ENCODE measurements at regions of chr11 and their contacts with region 1.

Region 1: GRCh38 chr11:69088676-69089146 is 40.0 kb downstream of the TPCN2 start:
- DNase-seq: peak; percentile 82
- ATAC-seq: peak; percentile 80
- H3K4me3 ChIP-seq: no peak overlapping the region
- H3K4me3 Mint-ChIP-seq: no peak overlapping the region
- H3K27ac ChIP-seq: no peak overlapping the region
- H3K27ac Mint-ChIP-seq: no peak overlapping the region
- H3K4me1 ChIP-seq: no peaks in the 10 kb centered on the region
- H3K4me1 Mint-ChIP-seq: peaks cover 2% of the 10 kb centered on the region
- H3K27me3 ChIP-seq: no peaks in the 10 kb centered on the region
- H3K27me3 Mint-ChIP-seq: no peaks in the 10 kb centered on the region
- CTCF ChIP-seq: peak; percentile 75

Region 2: DNA sequence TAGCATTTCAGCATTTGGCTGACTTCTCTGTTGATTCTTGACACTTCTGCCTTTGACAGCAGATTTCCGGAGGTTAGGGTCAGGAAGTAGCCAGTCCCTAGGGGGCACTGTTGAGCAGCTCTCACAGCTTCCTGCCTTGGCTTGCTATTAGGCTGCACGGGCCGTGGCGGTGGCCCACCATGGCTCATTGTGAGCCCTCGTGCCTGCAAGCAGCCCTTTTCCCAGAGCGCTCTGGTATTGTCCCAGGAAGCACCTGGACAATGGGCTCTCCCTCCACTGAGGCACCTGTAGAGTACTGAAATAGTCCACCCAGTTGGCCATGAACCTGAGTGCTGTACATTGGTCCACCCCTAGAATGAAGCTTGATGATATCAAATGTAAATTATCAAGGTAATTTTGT is 504.6 kb before region 1 on chr11:
- CTCF ChIA-PET with region 1: interaction called, 6 read pairs
- POLR2A ChIA-PET with region 1: no interaction called
- intact Hi-C with region 1: loop called (anchors 1 kb)
- DNase-seq: peak; percentile 70
- ATAC-seq: no peak
- H3K4me3 ChIP-seq: no peak overlapping the region
- H3K4me3 Mint-ChIP-seq: no peak overlapping the region
- H3K27ac ChIP-seq: no peak overlapping the region
- H3K27ac Mint-ChIP-seq: peak overlapping the region; percentile 50
- H3K4me1 ChIP-seq: no peaks in the 10 kb centered on the region
- H3K4me1 Mint-ChIP-seq: peaks cover 13% of the 10 kb centered on the region
- H3K27me3 ChIP-seq: no peaks in the 10 kb centered on the region
- H3K27me3 Mint-ChIP-seq: no peaks in the 10 kb centered on the region
- CTCF ChIP-seq: peak; percentile 75

Region 3: GRCh38 chr11:68903288-68904247 is 185.1 kb before region 1 on chr11 and contains the starts of genes IGHMBP2 and MRPL21:
- CTCF ChIA-PET with region 1: interaction called, 3 read pairs
- POLR2A ChIA-PET with region 1: no interaction called
- intact Hi-C with region 1: loop called (anchors 2 kb)
- DNase-seq: peak; percentile 90
- ATAC-seq: peak; percentile 95
- H3K4me3 ChIP-seq: peak within 1 kb of the TSS; percentile 79 to 99 (median 93)
- H3K4me3 Mint-ChIP-seq: peak within 1 kb of the TSS; percentile 97
- H3K27ac ChIP-seq: peak within 1 kb of the TSS; percentile 75 to 91
- H3K27ac Mint-ChIP-seq: peak within 1 kb of the TSS; percentile 88
- H3K4me1 ChIP-seq: peaks cover 14 to 21% of the 10 kb centered on the region in 2 donors
- H3K4me1 Mint-ChIP-seq: peaks cover 41% of the 10 kb centered on the region
- H3K27me3 ChIP-seq: no peaks in the 10 kb centered on the region
- H3K27me3 Mint-ChIP-seq: no peaks in the 10 kb centered on the region
- CTCF ChIP-seq: no peak
- total RNA-seq, gene IGHMBP2: 37.0 and 41.4 TPM in 2 replicates
- total RNA-seq, gene MRPL21: 34.4 and 35.8 TPM in 2 replicates

Region 4: GRCh38 chr11:68956142-68956541 is 132.6 kb before region 1 on chr11:
- CTCF ChIA-PET with region 1: interaction called, 5 read pairs
- POLR2A ChIA-PET with region 1: no interaction called
- intact Hi-C with region 1: loop called (anchors 2 kb)
- DNase-seq: peak; percentile 53
- ATAC-seq: no peak
- H3K4me3 ChIP-seq: no peak overlapping the region
- H3K4me3 Mint-ChIP-seq: no peak overlapping the region
- H3K27ac ChIP-seq: no peak overlapping the region
- H3K27ac Mint-ChIP-seq: no peak overlapping the region
- H3K4me1 ChIP-seq: peaks cover 4 to 13% of the 10 kb centered on the region in 2 donors
- H3K4me1 Mint-ChIP-seq: peaks cover 8% of the 10 kb centered on the region
- H3K27me3 ChIP-seq: peaks cover 0 to 8% (median 0%) of the 10 kb centered on the region in 4 experiments
- H3K27me3 Mint-ChIP-seq: no peaks in the 10 kb centered on the region
- CTCF ChIP-seq: peak; percentile 27

Region 5: DNA sequence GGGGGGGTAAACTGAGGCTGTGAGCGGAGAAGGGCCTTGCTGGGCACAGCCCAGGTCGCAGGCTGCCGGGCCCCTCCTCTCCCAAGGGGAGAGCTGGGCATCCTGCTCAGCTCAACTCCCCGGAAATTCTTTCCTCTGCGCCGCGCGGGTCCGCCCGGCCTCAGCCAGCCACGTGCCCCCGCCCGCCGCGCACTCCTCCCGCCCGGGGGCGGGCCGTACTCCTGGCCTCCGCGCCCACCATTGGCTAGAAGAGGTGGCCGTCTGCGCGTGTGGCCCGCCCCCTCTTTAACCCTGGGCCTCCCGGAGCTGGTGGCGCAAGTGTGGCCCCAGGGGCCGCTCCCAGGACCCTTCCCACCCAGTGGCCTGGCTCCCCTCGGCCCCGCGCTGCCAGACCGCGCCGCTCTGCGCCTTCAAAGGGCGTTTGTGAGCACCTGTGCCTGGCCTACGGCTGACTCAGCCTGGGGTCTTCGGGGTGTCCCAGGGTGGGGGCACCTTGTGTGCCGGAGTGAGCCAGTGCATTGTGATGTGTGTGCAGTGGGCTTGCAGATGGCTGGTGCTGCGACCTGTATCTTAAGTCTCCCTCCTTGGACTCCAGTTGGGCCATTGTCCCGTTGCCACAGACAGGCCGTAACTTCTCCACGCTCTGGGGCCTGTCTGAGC is 77.6 kb before region 1 on chr11:
- CTCF ChIA-PET with region 1: interaction called, 3 read pairs
- POLR2A ChIA-PET with region 1: no interaction called
- intact Hi-C with region 1: loop called (anchors 2 kb)
- DNase-seq: no peak
- ATAC-seq: peak; percentile 67
- H3K4me3 ChIP-seq: no peak overlapping the region
- H3K4me3 Mint-ChIP-seq: no peak overlapping the region
- H3K27ac ChIP-seq: no peak overlapping the region
- H3K27ac Mint-ChIP-seq: no peak overlapping the region
- H3K4me1 ChIP-seq: peaks cover 0 to 3% of the 10 kb centered on the region in 2 donors
- H3K4me1 Mint-ChIP-seq: peaks cover 2% of the 10 kb centered on the region
- H3K27me3 ChIP-seq: peaks cover 0 to 49% (median 13%) of the 10 kb centered on the region in 4 experiments
- H3K27me3 Mint-ChIP-seq: peaks cover 35% of the 10 kb centered on the region
- CTCF ChIP-seq: no peak

Region 6: DNA sequence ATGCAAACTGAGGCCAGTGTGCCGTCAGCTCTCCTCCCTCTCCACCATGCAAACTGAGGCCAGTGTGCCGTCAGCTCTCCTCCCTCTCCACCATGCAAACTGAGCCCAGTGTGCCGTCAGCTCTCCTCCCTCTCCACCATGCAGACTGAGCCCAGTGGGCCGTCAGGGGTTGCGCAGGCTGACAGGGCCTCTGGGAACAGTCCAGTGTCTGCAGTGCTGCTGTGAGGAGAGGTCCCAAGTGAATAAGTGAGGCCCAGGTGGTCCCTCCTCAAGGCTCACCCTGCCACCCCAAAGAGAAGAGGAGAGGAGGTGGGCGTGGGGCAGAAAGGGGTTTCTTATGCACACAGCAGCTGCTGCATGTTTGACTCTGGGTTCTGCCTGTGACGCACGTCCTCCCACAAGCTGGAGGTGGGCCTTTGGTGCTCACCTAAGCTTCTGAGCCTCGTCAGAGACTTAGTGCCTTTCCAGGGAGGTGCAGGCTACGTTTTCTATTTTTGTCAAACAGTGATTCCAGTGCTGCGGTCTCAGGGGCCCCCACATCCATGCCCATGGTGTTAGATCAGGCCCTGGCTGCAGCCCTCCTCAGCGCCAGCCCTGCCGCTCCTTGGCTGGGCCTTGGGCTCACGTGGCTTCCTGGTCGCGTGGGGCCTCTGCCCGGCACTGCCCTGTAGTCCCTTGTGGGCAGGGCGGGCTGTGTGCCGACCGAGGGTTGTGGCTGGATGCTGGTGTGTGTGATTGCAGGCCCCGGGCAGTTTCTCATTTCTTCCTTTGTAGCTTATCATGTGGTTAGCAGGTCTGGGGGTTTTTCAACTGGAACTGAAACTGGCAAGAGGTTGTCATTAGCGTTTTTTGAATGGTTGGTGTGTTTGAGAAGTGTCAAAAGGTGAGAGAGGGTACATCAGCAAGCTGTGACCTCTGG is 32.9 kb before region 1 on chr11:
- CTCF ChIA-PET with region 1: interaction called, 4 read pairs
- POLR2A ChIA-PET with region 1: interaction called, 3 read pairs
- intact Hi-C with region 1: loop called (anchors 1 kb)
- DNase-seq: peak; percentile 94
- ATAC-seq: peak; percentile 87
- H3K4me3 ChIP-seq: peak overlapping the region in 2 of 5 experiments; percentile 15 to 49
- H3K4me3 Mint-ChIP-seq: peak overlapping the region; percentile 61
- H3K27ac ChIP-seq: peak overlapping the region; percentile 92 to 98
- H3K27ac Mint-ChIP-seq: peak overlapping the region; percentile 89
- H3K4me1 ChIP-seq: peaks cover 30 to 64% of the 10 kb centered on the region in 2 donors
- H3K4me1 Mint-ChIP-seq: peaks cover 47% of the 10 kb centered on the region
- H3K27me3 ChIP-seq: no peaks in the 10 kb centered on the region
- H3K27me3 Mint-ChIP-seq: no peaks in the 10 kb centered on the region
- CTCF ChIP-seq: no peak

Region 7: DNA sequence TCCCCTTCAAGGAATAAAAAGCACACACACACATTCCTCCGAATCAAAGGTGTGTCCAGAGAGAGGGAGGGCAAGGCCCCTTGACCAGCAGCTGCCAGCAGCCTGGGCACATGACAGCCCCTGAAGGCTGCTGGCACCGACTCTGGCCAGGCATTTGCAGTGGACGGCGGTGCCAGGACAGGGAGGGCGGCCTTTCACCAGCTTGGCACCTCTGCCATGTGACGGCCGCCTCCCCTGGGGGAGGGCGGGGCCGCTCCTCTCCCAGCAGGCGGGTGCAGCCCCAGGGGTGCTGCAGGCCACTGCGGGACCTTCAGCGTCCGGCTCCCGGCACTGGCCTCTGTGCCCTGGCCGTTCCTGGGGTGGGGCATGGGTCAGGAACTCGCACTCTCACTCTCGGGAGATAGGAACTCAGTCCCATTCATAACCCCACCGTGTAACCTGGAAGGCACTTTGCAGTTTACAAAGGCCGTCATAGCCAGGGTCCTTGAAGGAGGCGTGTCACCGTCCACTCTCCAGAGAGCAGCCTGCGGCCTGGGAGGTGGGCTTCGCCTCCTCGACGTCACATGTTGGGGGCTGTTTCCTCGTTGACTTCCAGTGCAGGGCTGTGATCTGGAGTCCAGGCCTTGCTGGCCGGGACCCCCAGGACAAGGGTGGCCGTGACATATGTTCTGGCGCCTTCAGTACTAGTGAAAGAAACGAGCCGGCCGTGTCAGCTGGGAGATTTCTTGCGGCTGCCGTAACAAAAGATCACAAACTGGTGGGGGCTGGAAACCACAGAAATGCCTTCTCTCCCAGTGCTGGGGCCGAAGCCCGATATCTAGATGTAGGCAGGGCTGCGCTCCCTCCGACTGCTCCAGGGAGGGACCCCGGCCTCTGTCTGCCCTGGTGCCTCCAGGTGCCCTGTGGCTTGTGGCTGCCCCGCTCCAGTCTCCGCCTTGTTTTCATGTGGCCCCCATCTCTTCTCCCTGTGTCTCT is 27.2 kb after region 1 on chr11:
- CTCF ChIA-PET with region 1: no interaction called
- POLR2A ChIA-PET with region 1: no interaction called
- intact Hi-C with region 1: no loop called
- DNase-seq: no peak
- ATAC-seq: no peak
- H3K4me3 ChIP-seq: no peak overlapping the region
- H3K4me3 Mint-ChIP-seq: no peak overlapping the region
- H3K27ac ChIP-seq: no peak overlapping the region
- H3K27ac Mint-ChIP-seq: no peak overlapping the region
- H3K4me1 ChIP-seq: no peaks in the 10 kb centered on the region
- H3K4me1 Mint-ChIP-seq: peaks cover 2% of the 10 kb centered on the region
- H3K27me3 ChIP-seq: no peaks in the 10 kb centered on the region
- H3K27me3 Mint-ChIP-seq: no peaks in the 10 kb centered on the region
- CTCF ChIP-seq: no peak

Measured in B cell (primary cell).